Common myeloid progenitor, CD34-positive (primary cell): ENCODE measurements at regions of chr1 and their contacts with region 1.

Region 1: DNA sequence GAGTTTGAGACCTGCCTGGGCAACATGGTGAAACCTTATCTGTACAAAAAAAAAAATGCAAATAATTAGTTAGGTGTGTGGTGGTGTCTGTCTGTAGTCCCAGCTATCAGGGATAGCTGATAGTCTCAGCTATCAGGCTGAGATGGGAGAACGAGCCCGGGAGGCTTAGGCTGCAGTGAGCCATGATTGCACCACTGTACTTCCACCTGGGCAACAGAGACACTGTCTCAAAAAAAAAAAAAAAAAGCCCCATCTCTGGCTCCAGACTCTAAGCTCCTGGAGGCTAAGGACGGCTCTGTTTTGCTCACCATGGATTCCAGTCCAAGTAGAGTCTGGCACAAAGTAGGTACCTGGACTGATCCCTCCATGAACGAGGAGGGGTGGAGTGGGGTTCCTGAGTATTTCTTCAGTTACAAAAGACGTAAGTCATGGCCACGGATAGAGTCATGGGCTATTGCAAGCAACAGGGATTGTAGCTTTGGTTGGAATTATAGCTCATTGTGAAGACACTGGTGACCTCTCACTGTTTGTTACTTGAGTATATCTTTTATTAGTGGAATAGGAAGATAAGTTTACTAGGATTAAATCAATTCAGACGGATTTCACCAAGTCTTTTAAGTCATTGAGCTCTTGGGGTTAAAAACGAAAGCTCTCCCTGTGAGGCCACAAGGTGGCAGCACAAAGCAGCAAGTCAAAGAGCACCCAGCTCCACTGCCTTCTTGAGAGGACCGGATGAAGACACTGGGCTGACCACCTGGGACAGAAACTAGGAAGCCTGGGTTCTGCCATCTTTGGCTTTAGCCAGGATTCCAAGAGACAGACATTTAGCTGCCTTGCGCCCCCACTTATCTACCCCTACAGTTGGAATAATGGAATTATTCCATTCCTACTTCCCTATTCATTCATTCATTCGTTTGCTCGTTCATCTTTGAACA is 35.6 kb upstream of the TMEM61 start:
- DNase-seq: peak; percentile 76 to 88 (median 80)
- H3K4me3 ChIP-seq: no peak overlapping the region
- H3K27ac ChIP-seq: no peak overlapping the region
- H3K4me1 ChIP-seq: peaks cover 0 to 6% (median 2%) of the 10 kb centered on the region in 4 experiments
- H3K27me3 ChIP-seq: no peaks in the 10 kb centered on the region

Region 2: DNA sequence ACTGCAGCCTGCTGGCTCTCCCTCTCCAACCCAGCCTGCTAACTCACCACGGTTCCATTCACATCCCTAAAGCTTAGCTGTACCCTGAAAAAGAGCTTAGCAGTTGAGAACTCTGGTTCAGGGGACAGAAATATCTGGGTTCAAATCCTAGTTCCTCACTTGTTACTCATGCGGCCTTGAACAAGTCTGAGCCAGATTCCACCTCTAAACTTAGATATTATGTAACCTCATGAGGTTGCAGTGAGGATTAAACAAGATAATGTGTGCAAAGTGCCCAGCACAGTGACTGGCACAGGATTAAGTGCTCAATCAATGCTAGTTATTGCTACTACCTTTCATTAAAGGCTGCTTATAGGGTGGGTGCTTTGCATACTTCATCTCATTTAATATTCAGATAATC is 16.6 kb before region 1 on chr1:
- CTCF ChIA-PET with region 1: interaction called, 29 read pairs
- POLR2A ChIA-PET with region 1: no interaction called
- DNase-seq: no peak
- H3K4me3 ChIP-seq: no peak overlapping the region
- H3K27ac ChIP-seq: no peak overlapping the region
- H3K4me1 ChIP-seq: no peaks in the 10 kb centered on the region
- H3K27me3 ChIP-seq: no peaks in the 10 kb centered on the region

Region 3: DNA sequence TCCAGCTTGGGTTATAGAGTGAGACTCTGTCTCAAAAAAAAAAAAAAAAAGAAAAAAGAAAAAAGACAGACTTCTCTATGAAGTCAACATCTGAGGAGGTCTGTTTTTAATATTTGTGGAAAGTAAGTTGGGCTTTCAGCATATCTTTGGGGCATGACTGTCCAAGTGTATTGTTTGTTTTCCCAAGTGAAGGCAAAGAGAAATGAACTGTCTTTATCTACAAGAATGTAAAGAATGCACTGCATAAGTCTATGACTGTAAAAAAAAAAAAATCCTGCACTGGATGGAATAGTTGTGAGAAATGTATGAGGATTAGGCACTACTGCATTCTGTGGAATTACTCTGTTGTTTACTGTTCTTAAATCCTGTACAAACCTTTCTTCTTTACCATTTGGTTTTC is 10.0 kb before region 1 on chr1:
- CTCF ChIA-PET with region 1: interaction called, 29 read pairs
- POLR2A ChIA-PET with region 1: interaction called, 3 read pairs
- DNase-seq: no peak
- H3K4me3 ChIP-seq: no peak overlapping the region
- H3K27ac ChIP-seq: no peak overlapping the region
- H3K4me1 ChIP-seq: peaks cover 0 to 3% (median 0%) of the 10 kb centered on the region in 4 experiments
- H3K27me3 ChIP-seq: no peaks in the 10 kb centered on the region

Region 4: DNA sequence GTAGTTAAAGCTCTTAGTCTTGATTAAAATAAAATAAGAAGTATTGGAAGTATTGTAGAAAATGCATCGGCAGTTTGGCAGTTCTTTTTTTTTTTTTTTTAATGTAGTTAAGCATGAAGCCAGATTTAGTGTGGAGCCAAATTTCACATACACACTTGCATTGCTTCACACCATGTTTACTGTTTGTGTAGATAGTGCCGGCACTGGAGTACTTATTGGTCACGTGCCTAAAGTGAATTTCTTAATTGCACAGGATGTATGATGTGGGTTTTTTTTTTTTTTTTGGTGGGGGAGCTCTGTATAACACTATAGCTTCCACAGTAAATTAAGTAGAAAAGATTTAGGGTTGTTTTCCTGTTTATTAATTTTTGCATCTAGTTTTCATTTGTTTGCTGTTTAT is 14.4 kb after region 1 on chr1:
- CTCF ChIA-PET with region 1: interaction called, 21 read pairs
- POLR2A ChIA-PET with region 1: no interaction called
- DNase-seq: no peak
- H3K4me3 ChIP-seq: no peak overlapping the region
- H3K27ac ChIP-seq: no peak overlapping the region
- H3K4me1 ChIP-seq: no peaks in the 10 kb centered on the region
- H3K27me3 ChIP-seq: no peaks in the 10 kb centered on the region

Region 5: DNA sequence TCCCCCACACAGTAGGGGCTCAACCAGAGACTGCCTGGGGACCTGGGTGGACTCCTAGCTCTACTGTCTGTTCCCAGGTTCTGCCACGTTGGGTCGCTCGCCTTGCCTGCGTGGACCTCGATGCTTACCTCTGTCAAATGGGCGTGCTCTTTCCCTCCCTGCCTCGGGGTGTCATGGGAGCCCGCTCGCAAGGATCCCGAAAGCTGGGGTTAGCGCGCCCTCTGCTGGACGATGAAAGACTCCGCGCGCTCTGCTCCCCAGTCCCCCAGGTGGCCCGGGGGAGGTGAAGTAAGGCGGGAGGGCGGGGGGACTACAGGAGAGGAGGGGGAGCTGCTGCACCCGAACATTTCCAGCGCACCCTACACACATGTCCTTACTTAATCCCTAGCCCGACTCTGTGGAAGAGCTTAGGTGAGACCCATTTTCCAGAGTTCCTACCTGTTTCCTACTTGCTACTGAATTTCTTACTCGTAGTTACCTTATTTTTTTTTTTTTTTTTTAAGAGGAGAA is 51.5 kb after region 1 on chr1:
- CTCF ChIA-PET with region 1: interaction called, 235 read pairs
- POLR2A ChIA-PET with region 1: no interaction called
- DNase-seq: peak; percentile 68 to 81 (median 80)
- H3K4me3 ChIP-seq: peak overlapping the region in 4 of 7 experiments; percentile 14 to 63 (median 57)
- H3K27ac ChIP-seq: no peak overlapping the region
- H3K4me1 ChIP-seq: peaks cover 0 to 10% (median 8%) of the 10 kb centered on the region in 4 experiments
- H3K27me3 ChIP-seq: peaks cover 0 to 62% (median 20%) of the 10 kb centered on the region in 5 experiments

Region 6: GRCh38 chr1:55021965-55022546 is 77.2 kb after region 1 on chr1:
- CTCF ChIA-PET with region 1: interaction called, 30 read pairs
- POLR2A ChIA-PET with region 1: no interaction called
- DNase-seq: peak; percentile 80 to 84 (median 81)
- H3K4me3 ChIP-seq: no peak overlapping the region
- H3K27ac ChIP-seq: no peak overlapping the region
- H3K4me1 ChIP-seq: no peaks in the 10 kb centered on the region
- H3K27me3 ChIP-seq: peaks cover 0 to 4% (median 0%) of the 10 kb centered on the region in 5 experiments

Region 7: DNA sequence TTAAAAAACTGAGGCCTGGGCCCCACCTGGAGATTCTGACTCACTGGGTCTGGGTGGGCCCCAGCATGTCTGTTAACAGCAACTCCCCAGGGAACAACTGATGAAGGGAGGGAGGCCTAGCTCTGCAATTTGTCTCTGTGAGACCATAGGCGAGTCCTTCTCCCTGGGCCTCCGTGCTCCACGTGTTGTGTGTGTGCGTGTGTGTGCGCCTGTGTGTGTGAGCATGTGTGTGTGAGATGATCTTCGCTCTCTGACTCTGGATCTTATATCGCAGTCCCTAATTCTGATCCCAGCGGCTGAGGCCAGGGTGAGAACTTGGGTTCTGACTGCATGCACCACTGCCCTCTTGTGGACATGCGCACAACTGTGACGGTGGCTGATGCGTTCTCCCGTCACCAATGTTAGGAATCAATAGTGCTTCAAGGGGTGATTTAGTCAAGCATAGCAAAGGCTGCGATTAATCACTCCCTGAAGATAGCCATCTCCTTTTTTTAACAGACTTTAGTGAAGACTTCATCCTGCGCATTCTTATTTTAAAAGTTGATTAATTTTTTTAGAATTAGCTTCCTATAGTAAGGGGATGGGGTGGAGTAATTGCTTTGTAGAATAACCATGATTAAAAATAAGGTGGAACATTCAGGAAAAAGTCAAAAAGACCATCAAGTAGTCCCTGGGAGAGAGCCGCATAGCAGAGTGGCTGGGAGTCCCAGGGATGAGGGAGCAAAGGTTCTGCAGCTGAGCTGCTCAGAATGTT is 332.7 kb after region 1 on chr1:
- CTCF ChIA-PET with region 1: no interaction called
- POLR2A ChIA-PET with region 1: no interaction called
- DNase-seq: peak; percentile 80 to 86 (median 81)
- H3K4me3 ChIP-seq: peak overlapping the region in 1 of 7 experiments; percentile 2
- H3K27ac ChIP-seq: no peak overlapping the region
- H3K4me1 ChIP-seq: peaks cover 0 to 8% (median 3%) of the 10 kb centered on the region in 4 experiments
- H3K27me3 ChIP-seq: peaks cover 0 to 3% (median 0%) of the 10 kb centered on the region in 5 experiments